T-cell (primary cell): ENCODE measurements at regions of chr6 and their contacts with region 1.

Region 1: GRCh38 chr6:29834564-29835436 is 7.2 kb downstream of the HLA-G start:
- DNase-seq: peak in 29 of 35 experiments; percentile 12 to 64 (median 46)
- ATAC-seq: peak in 2 of 4 experiments; percentile 52 to 67
- H3K4me3 ChIP-seq: no peak overlapping the region
- H3K4me3 Mint-ChIP-seq: no peak overlapping the region
- H3K27ac ChIP-seq: no peak overlapping the region
- H3K27ac Mint-ChIP-seq: peak overlapping the region in 1 of 2 donors; percentile 12
- H3K4me1 ChIP-seq: peaks cover 0 to 6% of the 10 kb centered on the region in 2 experiments
- H3K4me1 Mint-ChIP-seq: peaks cover 3 to 5% (median 4%) of the 10 kb centered on the region in 3 donors
- H3K27me3 ChIP-seq: peaks cover 10 to 46% of the 10 kb centered on the region in 2 experiments
- H3K27me3 Mint-ChIP-seq: peaks cover 62 to 67% of the 10 kb centered on the region in 2 donors

Region 2: DNA sequence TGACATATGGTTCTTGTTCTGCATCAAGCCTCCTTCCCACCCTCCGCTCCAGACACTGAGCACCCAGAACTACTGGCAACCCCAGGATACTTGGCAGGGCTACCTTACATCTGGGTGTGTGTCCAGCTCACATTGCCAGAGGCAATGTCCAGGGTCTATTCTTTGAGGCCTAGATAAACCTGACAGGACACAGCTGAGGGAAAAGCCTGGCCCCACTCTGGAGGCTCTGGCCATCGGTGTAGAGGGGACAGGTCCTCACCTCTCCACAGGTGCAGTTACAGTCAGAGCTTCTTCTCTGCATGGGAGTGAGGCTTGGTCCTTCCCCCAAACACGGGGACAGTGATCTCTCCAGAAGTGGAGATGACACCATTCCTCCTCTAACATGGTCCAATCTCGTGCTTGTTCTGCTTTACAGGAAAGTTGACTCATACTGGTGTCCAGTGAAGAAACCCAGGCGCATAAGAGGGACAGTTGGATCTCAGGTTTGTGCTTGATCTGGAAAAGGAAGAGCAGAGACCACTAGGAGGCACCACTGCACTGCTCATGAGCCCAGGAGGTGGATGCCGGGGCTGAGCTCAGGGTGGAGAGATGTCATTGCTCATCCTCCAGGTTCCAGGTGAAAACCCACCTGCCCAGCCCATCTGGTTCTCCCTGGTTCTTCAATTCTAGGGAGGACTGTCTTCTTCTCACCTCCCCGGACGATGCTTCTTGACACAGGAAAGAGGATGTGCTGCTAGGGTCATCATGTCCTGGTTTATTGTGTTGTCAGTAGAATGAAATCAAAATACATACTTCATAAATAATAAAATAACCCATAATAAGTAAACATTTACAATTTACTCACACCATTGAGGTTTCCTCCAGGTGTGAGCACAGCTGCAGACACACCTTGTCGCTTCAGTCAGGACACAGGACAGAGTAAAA is 96.8 kb before region 1 on chr6:
- CTCF ChIA-PET with region 1: interaction called in 1 of 2 experiments, 15 read pairs
- POLR2A ChIA-PET with region 1: no interaction called
- DNase-seq: peak in 34 of 35 experiments; percentile 38 to 88 (median 64)
- ATAC-seq: peak; percentile 77 to 91 (median 84)
- H3K4me3 ChIP-seq: no peak overlapping the region
- H3K4me3 Mint-ChIP-seq: no peak overlapping the region
- H3K27ac ChIP-seq: no peak overlapping the region
- H3K27ac Mint-ChIP-seq: no peak overlapping the region
- H3K4me1 ChIP-seq: no peaks in the 10 kb centered on the region
- H3K4me1 Mint-ChIP-seq: peaks cover 7 to 18% (median 7%) of the 10 kb centered on the region in 3 donors
- H3K27me3 ChIP-seq: no peaks in the 10 kb centered on the region
- H3K27me3 Mint-ChIP-seq: no peaks in the 10 kb centered on the region